Heart right ventricle (tissue), 16 donors: ENCODE measurements at regions of chr11 and their contacts with region 1.

Region 1: DNA sequence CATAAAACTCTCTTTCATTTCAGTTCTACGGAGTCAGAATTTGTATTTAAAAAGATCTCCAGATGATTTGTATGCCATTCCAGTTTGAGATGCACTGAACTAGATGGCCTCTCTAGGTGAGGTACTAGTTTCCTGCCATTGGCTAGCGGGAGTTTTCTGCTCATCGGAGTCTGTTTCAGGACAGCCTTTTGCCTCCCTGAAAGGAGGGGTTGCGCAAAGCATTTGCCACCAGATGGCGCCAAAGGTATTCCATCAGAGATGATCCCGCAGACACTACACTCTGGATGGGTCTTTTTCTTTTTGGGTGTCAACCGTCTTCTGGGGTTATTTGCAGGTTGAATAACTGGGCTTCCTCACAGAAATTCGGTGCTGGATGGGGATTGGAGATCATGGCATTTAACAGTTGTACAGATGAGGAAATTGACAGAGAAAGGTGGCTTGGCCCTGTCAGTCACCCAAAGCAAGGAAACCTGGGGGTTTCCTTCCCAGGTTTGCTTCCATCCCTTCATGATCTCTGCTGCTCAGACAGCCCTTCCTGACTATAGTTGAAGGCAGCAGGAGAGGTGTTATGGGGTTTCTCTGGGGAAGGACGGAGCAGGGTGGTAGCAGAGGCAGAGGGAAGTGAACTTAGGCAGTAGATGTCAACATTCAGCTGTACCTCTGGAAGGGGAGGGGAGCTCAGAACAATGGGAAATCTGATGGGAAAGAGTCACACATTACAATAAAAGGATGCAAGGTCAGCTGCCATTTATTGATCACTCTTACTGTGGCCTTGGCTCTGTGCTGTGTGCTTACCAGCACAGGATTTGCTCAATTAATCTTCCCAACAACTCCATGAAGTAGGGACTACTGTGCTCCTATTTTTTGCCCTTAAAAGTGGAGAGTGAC is 81.6 kb downstream of the CCDC81 start:
- DNase-seq: peak; percentile 76 to 90
- ATAC-seq: peak; percentile 73 to 89 (median 84)
- H3K4me3 ChIP-seq: no peak overlapping the region
- H3K27ac ChIP-seq: peak overlapping the region in 6 of 10 donors; percentile 1 to 70 (median 28)
- H3K4me1 ChIP-seq: peaks cover 12 to 55% (median 42%) of the 10 kb centered on the region in 9 donors
- H3K27me3 ChIP-seq: no peaks in the 10 kb centered on the region
- CTCF ChIP-seq: peak; percentile 90 to 97 (median 94)

Region 2: DNA sequence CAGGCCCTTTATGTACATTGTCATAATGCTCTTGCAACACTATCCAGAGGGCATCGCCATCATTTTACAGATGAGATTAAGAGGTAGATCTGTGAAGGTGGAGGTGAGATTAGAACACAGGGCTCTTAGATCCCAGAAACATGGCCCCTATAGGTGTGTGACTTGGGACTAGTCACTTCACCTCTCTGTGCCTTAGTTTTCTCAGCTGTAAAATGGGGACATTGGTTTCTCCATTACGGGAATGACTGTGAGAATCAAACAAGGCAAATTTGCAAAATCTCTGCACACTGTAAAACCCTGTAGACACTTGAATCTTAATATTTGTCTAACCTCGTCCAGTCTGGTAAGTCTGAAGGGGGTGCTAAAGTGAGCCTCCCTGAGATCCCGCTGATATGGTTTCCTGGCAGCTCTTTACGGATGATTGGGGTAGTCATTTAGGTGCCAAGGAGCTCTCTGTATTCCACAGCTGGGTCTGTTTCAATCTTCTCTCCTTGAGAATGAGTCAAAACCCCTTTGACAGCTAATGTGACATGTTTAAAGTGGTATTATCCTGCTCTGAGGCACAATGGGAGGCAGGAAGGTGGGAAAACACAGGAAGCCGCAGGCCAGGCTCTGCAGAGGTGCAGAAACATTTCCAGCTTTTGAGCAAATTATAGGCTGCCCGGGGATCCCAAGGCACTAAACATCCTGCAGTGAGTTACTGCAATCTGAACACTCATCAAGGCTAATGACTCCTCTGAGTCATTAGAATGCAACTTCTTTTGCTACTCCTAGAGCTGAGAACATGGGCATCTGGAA is 59.2 kb after region 1 on chr11:
- intact Hi-C with region 1: loop called in 1 of 10 experiments (anchors 5 kb)
- DNase-seq: no peak
- ATAC-seq: peak in 4 of 8 donors; percentile 22 to 41 (median 37)
- H3K4me3 ChIP-seq: no peak overlapping the region
- H3K27ac ChIP-seq: peak overlapping the region in 5 of 10 donors; percentile 3 to 57 (median 17)
- H3K4me1 ChIP-seq: peaks cover 9 to 68% (median 46%) of the 10 kb centered on the region in 9 donors
- H3K27me3 ChIP-seq: no peaks in the 10 kb centered on the region
- CTCF ChIP-seq: no peak

Region 3: GRCh38 chr11:86608251-86608799 is 152.0 kb after region 1 on chr11:
- intact Hi-C with region 1: loop called in 9 of 10 experiments (anchors 1 to 5 kb)
- DNase-seq: peak; percentile 68 to 73
- ATAC-seq: peak; percentile 72 to 90 (median 86)
- H3K4me3 ChIP-seq: peak overlapping the region in 4 of 10 donors; percentile 4 to 22 (median 15)
- H3K27ac ChIP-seq: peak overlapping the region in 2 of 10 donors; percentile 13 to 15
- H3K4me1 ChIP-seq: peaks cover 6 to 41% (median 26%) of the 10 kb centered on the region in 9 donors
- H3K27me3 ChIP-seq: no peaks in the 10 kb centered on the region
- CTCF ChIP-seq: peak; percentile 84 to 98 (median 94)

Region 4: GRCh38 chr11:86632499-86633269 is 176.4 kb after region 1 on chr11:
- intact Hi-C with region 1: no loop called
- DNase-seq: no peak
- ATAC-seq: peak in 4 of 8 donors; percentile 21 to 39 (median 32)
- H3K4me3 ChIP-seq: no peak overlapping the region
- H3K27ac ChIP-seq: peak overlapping the region in 1 of 10 donors; percentile 3
- H3K4me1 ChIP-seq: peaks cover 10 to 37% (median 35%) of the 10 kb centered on the region in 9 donors
- H3K27me3 ChIP-seq: no peaks in the 10 kb centered on the region
- CTCF ChIP-seq: peak in 6 of 9 donors; percentile 22 to 46 (median 34)

Region 5: DNA sequence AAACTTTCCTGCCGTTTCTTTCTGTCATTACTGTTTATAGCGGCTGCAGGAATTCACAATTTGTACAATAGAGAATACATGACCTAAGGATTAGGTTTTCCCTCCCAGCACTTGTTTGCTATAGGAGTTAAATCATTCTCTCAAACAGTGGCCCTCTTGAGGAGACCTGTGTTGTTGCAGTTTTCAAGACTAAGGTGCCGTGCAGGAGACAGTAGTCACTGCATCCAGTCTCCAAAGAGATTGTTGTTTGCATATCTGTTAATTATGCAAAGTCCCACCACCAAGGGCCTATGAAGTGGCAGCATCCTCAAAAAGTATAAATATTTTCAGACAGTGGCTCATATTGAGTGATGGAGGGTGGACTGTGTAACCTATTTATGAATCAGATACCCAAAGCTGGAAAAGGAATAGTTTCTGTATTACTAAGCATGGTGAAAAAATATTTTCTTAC is 346.3 kb after region 1 on chr11:
- intact Hi-C with region 1: loop called in 4 of 10 experiments (anchors 5 kb)
- DNase-seq: no peak
- ATAC-seq: peak in 4 of 8 donors; percentile 32 to 40 (median 34)
- H3K4me3 ChIP-seq: peak overlapping the region in 3 of 10 donors; percentile 6 to 70 (median 64)
- H3K27ac ChIP-seq: no peak overlapping the region
- H3K4me1 ChIP-seq: peaks cover 0 to 52% (median 23%) of the 10 kb centered on the region in 9 donors
- H3K27me3 ChIP-seq: peaks cover 0 to 42% (median 0%) of the 10 kb centered on the region in 7 donors
- CTCF ChIP-seq: peak; percentile 13 to 63 (median 49)

Region 6: GRCh38 chr11:86818466-86819192 is 362.3 kb after region 1 on chr11:
- intact Hi-C with region 1: loop called (anchors 1 to 5 kb)
- DNase-seq: peak in 1 of 2 donors; percentile 20
- ATAC-seq: peak in 7 of 8 donors; percentile 35 to 63 (median 45)
- H3K4me3 ChIP-seq: no peak overlapping the region
- H3K27ac ChIP-seq: no peak overlapping the region
- H3K4me1 ChIP-seq: peaks cover 0 to 44% (median 10%) of the 10 kb centered on the region in 9 donors
- H3K27me3 ChIP-seq: no peaks in the 10 kb centered on the region
- CTCF ChIP-seq: peak; percentile 59 to 88 (median 80)